G401 (cell line): ENCODE measurements at regions of chr9 and their contacts with region 1.

Region 1: DNA sequence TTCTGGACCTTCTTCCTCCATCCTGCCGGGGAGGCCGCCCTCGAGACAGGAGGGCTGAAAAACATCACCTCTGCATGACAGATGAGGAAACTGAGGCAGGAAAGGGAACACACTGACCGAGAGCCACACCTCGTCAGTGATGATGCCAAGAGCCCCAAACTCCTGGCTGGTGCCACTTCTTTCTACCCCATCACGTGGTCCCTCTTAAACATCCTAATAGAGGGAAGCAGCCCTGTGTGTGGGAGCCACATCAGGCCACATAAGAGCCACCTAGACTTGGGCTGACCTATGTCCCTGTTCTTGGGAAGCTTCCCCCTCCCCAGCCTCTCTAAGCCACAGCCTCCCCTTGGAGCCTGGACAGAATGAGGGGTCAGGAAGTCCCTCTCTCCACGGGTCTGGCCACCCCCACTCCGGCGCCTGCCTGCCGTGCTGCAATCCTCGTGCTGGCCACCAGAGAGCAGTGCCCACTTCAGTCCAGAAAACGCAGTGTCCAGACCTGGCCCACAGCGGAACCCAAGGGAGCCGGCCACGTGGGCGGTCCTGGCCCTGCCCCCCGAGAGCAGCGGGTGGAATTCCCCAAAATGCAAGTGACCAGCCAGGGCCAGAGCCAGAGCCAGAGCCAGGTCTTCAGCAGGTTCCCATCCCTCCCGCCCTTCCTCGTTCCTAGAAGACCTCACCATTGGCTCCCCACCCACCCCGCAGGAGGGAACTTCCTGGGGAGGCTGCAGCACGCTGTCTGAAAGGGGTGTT is 54.7 kb upstream of the SARDH start:
- DNase-seq: peak; percentile 72

Region 2: DNA sequence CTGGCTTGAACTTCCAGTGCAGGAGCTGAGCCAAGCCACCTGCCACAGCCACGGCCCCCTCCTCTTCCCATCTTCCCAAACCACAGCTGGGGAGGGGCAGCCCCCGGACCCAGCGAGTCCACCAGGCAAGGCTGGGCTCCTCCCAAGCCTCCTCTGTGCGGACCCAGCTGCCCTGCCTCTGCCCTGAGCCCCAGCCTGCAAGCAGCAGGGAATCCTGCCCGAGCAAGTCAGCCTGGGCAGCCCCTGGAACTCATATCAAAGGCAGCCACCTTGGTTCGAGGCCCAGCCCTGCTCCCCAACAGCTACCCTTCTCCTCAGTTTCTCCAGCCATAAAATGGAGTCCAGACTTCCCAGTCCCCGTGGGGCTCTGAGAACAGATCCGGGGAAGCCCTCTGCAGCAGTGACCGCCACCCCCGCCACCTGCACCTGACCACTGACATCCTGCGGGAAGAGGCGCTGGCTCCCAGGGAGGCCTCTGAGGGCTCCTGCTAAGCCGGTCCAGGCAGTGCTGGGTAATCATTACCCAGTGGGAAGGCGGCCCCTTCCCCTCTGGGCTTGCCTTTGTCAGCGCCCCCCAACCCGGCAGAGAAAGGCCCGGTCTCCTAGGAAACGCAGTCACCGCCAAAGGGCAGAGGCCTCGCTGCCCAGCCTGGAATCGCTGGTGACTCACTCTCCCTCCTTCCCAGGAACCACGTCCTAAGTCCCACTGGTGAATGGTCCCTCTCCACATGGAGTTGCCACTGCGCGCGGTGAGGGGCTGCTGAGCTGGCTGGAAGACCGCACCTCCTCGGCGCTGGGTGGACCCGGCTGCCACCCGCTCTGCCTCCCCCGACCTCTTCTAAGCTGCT is 197.7 kb after region 1 on chr9:
- in situ Hi-C with region 1: no loop called
- DNase-seq: no peak

Region 3: DNA sequence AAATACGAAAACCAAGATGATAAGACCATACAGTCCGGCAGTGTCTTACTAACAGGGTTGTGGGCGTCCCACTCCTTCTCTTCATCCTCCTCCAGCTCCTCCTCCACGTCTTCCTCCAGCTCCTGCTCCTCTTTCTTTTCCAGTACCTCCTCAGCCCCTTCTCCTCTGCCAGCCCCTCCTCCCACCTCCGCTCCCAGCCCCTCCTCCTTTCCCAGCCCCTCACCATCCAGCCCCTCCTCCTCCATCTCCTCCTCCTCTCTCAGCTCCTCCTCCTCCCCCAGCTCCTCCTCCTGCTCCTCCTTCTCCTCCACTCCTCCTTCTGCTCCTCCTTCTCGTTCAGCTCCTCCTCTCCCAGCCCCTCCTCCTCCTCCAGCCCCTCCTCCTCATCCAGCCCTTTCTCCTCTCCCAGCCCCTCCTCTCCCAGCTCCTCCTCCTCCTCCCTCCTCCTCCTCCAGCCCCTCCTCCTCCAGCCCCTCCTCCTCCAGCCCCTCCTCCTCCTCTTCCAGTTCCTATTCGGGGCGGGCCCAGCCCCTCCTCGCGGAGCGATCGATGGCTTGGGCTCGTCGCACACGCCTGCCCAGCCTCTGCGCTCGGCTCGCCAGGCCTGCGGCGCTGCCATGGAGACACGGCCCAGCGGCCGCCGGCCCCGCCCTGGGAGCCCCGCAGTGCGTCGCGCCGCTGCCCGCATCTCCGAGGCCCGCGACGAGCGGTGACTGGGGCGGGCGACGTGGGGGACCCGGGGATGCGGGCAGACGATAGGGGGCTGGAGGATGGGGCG is 232.1 kb after region 1 on chr9 and contains the start of gene BRD3OS:
- in situ Hi-C with region 1: loop called (anchors 25 kb)
- DNase-seq: peak; percentile 99
- total RNA-seq, gene BRD3OS: 32.9 and 50.7 TPM in 2 replicates